Activated CD4-positive, alpha-beta T cell treated with anti-CD3 and anti-CD28 coated beads, Interleukin-2, amount 10 ng/mL, durations not matched to agents 7 days and 5 days (primary cell): ENCODE measurements at regions of chr7 and their contacts with region 1.

Region 1: GRCh38 chr7:68348401-68348800 is 1249.9 kb upstream of the AUTS2 start:
- DNase-seq: no peak
- H3K4me3 Mint-ChIP-seq: no peak overlapping the region
- H3K27ac Mint-ChIP-seq: no peak overlapping the region
- H3K4me1 Mint-ChIP-seq: no peaks in the 10 kb centered on the region
- H3K27me3 Mint-ChIP-seq: no peaks in the 10 kb centered on the region

Region 2: GRCh38 chr7:68324621-68325020 is 23.8 kb before region 1 on chr7:
- CTCF ChIA-PET with region 1: no interaction called
- POLR2A ChIA-PET with region 1: no interaction called
- DNase-seq: no peak
- H3K4me3 Mint-ChIP-seq: no peak overlapping the region
- H3K27ac Mint-ChIP-seq: no peak overlapping the region
- H3K4me1 Mint-ChIP-seq: no peaks in the 10 kb centered on the region
- H3K27me3 Mint-ChIP-seq: no peaks in the 10 kb centered on the region

Region 3: DNA sequence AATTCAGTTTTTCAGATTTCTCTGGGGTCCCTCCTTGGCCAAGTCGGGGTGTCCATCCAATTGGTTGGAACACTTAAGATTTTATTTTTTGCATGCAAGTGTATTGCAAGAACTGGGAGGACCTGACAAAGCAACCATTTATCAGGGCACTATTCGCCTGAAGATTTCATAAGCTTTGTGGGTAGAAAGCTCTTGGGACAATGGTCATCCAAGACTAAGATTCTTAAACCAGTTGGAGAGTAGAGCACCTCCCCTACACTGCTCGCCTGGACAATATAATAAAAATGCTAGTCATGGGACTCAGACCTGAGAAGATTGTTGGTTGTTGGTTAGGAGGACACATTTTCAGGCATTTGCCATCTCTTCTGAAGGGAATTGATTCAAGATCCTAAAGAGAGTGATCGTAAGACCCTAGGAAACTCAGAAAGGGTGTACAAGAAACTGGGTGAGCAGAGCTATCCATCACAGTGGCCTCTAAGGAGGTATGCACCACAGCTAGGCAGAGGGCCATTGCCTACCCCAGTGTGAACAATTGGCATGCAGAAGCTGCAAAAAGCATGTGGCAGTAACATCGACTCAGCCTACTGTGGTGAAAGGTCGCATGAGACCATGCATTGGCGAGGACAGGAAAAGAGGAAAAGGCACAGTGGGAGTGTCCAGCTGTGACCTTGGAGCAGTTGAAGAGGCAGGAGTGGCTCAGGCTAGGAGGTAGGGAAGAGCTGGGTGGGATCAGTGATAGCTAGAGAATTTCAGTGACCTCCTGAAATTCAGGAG is 14.5 kb after region 1 on chr7:
- CTCF ChIA-PET with region 1: interaction called, 3 read pairs
- POLR2A ChIA-PET with region 1: interaction called, 12 read pairs
- DNase-seq: no peak
- H3K4me3 Mint-ChIP-seq: no peak overlapping the region
- H3K27ac Mint-ChIP-seq: no peak overlapping the region
- H3K4me1 Mint-ChIP-seq: no peaks in the 10 kb centered on the region
- H3K27me3 Mint-ChIP-seq: no peaks in the 10 kb centered on the region